Transverse colon (tissue), 4 donors: ENCODE measurements at regions of chr16 and their contacts with region 1.

Region 1: DNA sequence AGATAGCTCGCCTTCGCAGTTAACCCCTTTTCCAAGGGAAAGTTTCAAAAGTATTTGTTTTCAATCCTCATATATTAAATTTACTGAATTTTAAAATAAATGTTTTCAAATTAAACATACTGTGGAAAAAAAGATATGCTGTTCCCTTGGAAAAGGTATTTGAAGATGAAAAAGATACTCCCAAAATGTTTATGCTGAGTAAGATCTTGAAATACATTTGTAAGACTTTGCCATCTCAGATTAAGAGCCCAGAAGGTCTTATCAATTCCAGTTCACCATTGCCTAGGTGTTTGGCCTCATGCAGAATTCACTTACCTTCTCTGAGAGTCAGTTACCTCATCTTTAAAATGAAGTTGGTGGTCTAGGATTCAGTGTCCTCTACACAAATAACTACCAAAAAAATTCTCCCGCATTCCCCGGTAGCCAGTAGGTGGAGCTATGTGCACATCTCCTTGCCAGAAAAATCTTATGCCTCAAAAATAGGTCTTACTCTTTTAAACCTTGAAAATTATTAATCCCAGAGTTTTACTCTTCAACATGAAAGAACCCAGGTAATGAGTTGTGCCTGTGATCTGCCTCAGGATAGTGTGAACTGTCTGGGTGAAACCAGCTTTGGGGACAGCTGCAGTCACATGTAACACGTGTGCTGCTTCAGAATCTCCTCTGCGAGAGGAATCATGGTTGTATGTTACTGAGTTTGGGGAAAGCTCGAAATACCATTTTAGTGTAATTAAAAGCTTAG is 178.3 kb downstream of the MRTFB start:
- DNase-seq: peak; percentile 35
- H3K4me3 ChIP-seq: no peak overlapping the region
- H3K27ac ChIP-seq: no peak overlapping the region
- H3K4me1 ChIP-seq: no peaks in the 10 kb centered on the region
- H3K27me3 ChIP-seq: no peaks in the 10 kb centered on the region
- CTCF ChIP-seq: peak; percentile 65 to 81 (median 76)
- EP300 ChIP-seq: no peak
- POLR2A ChIP-seq: no peak

Region 2: DNA sequence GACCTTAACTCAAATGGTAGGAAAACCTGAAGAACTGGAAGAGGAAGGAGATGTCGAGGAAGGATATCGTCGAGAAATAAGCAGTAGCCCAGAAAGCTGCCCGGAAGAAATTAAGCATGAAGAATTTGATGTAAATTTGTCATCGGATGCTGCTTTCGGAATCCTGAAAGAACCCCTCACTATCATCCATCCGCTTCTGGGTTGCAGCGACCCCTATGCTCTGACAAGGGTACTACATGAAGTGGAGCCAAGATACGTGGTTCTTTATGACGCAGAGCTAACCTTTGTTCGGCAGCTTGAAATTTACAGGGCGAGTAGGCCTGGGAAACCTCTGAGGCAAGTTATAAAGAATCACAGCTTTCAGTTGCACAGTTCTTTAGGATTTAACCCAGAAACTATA is 314.1 kb before region 1 on chr16:
- in situ Hi-C with region 1: loop called in 2 of 4 experiments (anchors 25 kb)
- intact Hi-C with region 1: no loop called
- DNase-seq: no peak
- H3K4me3 ChIP-seq: no peak overlapping the region
- H3K27ac ChIP-seq: no peak overlapping the region
- H3K4me1 ChIP-seq: peaks cover 0 to 6% (median 0%) of the 10 kb centered on the region in 4 donors
- H3K27me3 ChIP-seq: no peaks in the 10 kb centered on the region
- CTCF ChIP-seq: peak in 2 of 5 experiments; percentile 13 to 32
- EP300 ChIP-seq: no peak
- POLR2A ChIP-seq: no peak

Region 3: GRCh38 chr16:14364386-14365204 is 115.1 kb after region 1 on chr16:
- in situ Hi-C with region 1: no loop called
- intact Hi-C with region 1: no loop called
- DNase-seq: no peak
- H3K4me3 ChIP-seq: no peak overlapping the region
- H3K27ac ChIP-seq: no peak overlapping the region
- H3K4me1 ChIP-seq: no peaks in the 10 kb centered on the region
- H3K27me3 ChIP-seq: no peaks in the 10 kb centered on the region
- CTCF ChIP-seq: no peak
- EP300 ChIP-seq: no peak
- POLR2A ChIP-seq: no peak